Body of pancreas (tissue), 4 donors: ENCODE measurements at regions of chr21 and their contacts with region 1.

Region 1: GRCh38 chr21:42939582-42940410 is 14.4 kb upstream of the ERVH48-1 start:
- DNase-seq: peak; percentile 81 to 90 (median 86)
- ATAC-seq: peak; percentile 98
- H3K4me3 ChIP-seq: no peak overlapping the region
- H3K27ac ChIP-seq: peak overlapping the region in 3 of 4 donors; percentile 36 to 58 (median 56)
- H3K4me1 ChIP-seq: peaks cover 15% of the 10 kb centered on the region
- H3K27me3 ChIP-seq: no peaks in the 10 kb centered on the region
- CTCF ChIP-seq: no peak
- POLR2A ChIP-seq: no peak

Region 2: DNA sequence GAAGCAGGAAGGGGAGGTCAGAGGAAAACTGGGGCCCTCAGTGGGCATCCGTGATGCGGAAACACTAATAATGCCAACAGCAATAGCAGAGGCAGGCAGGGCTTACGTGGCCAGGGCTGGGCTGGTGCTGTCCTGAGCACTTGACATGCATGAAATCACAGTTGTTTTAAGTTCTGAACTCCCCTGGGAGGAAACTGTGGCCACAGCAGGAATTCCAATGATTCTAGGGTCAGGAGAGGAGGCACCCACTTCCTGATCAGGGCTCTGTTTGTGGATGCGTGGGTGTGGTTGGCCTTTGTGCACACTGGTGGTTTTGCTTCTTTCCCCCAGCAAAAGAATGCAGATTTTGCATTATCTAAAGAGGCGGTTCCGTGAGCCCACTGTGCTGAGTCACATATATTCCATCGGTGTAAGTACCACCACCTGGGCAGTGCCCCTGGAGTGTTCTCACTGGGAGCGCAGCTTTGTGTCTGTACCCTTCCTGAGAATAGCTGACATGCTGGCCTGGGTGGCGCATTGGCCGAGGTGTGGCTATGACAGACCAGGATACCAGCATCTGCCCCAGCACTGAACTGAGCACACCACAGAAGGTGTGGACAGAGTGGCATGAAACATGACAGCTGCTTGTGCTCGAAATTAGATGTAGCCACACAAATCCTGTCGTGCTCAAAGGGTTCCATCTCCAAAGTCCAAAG is 215.4 kb before region 1 on chr21:
- intact Hi-C with region 1: no loop called
- DNase-seq: peak in 1 of 4 donors; percentile 30
- ATAC-seq: peak; percentile 66
- H3K4me3 ChIP-seq: no peak overlapping the region
- H3K27ac ChIP-seq: peak overlapping the region in 1 of 4 donors; percentile 27
- H3K4me1 ChIP-seq: peaks cover 18% of the 10 kb centered on the region
- H3K27me3 ChIP-seq: peaks cover 0 to 4% of the 10 kb centered on the region in 2 donors
- CTCF ChIP-seq: no peak
- POLR2A ChIP-seq: no peak

Region 3: GRCh38 chr21:42988236-42988965 is 48.6 kb after region 1 on chr21:
- intact Hi-C with region 1: loop called (anchors 10 kb)
- DNase-seq: no peak
- ATAC-seq: no peak
- H3K4me3 ChIP-seq: no peak overlapping the region
- H3K27ac ChIP-seq: no peak overlapping the region
- H3K4me1 ChIP-seq: peaks cover 4% of the 10 kb centered on the region
- H3K27me3 ChIP-seq: no peaks in the 10 kb centered on the region
- CTCF ChIP-seq: no peak
- POLR2A ChIP-seq: no peak